ENCODE measurements at regions of chr12 and their contacts with region 1.

Region 1: DNA sequence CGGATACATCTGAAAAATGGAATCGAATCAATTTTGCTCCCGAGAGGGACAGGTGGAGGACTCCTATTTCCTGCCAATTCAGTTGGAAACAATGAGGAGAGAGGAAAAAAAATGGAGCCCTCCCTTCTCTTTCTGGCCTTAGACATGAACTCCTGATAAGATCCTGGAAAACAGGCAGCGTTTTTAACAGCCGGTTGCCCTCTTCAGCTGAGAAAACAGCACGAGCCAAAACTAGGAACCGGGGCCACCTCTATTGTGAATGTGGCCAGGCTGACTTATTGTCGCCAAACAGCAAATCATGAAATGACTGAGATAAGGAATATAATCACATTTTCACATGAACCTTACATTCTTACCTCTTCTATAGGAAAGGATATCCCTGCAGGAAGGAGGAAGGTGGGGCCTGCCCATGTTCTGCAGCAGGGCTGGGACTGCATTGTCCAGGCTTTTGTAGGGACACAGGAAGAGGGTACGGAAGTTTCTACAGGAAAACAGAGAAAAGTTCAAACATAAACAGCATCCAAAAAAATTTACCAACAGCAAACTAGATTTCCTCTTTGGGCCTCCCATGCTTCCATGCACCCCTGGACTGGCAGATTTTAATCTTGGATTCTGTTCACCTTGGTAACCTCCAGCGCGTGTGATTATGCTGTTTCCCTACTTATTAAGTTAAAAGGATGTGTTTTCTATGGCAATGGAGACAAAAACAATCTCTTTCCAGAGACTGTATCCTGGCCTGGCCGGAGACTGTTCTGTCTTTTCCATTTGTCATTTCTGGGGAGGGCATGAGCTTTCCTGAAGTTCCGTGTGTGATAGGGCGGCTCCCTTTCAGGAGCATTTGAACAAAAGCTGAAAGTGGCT is 29.0 kb upstream of the ELK3 start:
- DNase-seq: no peak
- H3K4me3 ChIP-seq: no peak overlapping the region
- CTCF ChIP-seq: no peak

Region 2: GRCh38 chr12:96015672-96016071 is 149.5 kb before region 1 on chr12:
- in situ Hi-C with region 1: no loop called
- DNase-seq: peak; percentile 15
- H3K4me3 ChIP-seq: no peak overlapping the region
- CTCF ChIP-seq: peak; percentile 62

Region 3: DNA sequence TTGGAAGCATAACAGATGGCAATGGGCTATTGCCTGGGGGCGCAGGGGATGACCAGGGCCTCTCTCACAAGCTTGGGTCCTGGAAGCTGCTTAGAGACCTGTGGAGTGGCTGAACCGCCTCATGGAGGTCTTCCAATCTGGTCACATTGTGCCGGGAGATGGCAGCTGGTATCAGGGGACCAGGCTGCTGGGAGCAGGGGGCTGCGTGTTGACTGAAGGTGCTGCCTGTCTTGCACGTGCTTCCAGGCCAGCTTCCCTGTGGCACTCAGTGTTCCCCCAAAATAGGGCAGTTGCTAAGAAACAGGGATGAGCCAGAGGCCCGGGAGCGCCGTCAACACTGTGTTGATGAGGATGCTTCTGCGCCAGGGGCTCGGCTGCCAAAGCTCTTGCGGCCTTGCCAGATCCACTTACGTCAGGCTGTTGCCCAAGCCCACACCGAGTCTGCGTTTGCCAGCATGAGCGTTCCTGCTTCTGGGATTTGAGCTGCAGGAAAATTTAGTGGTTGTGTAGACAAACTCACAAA is 68.8 kb after region 1 on chr12:
- in situ Hi-C with region 1: loop called (anchors 5 kb)
- DNase-seq: peak; percentile 95
- H3K4me3 ChIP-seq: no peak overlapping the region
- CTCF ChIP-seq: no peak

Region 4: DNA sequence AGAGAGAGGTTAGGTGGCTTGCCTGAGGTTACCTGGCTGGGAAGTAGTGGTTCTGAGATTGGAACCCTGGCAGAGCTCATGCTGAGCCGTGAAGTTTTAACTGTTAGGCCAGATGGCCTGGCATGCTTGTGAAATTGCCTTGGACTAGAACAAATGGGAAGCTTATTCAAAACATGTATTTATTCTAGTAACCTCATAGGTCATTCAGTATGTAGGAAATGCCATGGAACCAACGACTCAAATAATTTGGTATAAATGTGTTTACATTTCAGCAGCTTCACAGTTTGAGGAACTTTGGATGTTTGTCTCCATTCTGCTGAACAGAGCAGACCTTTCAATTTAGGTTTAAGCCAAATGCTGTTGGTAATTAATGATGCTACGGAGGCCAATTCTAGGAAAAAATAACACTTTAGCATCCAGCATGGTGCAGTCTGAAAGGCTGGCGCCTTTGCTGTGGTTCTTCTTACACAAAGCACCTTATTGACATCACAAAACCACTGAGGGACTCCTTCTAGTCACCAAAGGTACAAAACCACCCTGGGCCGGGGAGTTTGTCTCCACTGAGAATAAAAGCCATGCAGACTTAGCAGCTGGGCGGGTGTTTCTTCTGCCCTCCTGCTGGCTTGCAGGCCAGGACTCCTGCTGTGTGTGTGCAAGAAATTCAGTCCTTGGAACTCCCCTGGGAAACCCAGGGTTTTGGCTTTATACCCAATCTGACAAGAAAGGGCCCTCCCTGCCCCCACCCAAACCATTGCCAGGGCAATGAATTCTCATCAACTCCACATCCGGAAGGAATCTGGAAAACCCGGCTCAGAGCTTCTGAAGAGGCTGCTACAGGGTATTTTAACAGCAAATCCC is 93.2 kb after region 1 on chr12:
- in situ Hi-C with region 1: no loop called
- DNase-seq: peak; percentile 91
- H3K4me3 ChIP-seq: no peak overlapping the region
- CTCF ChIP-seq: no peak